HCT116 (cell line): ENCODE measurements at regions of chr15 and their contacts with region 1.

Region 1: GRCh38 chr15:71780115-71780976 is 30.0 kb upstream of the NR2E3 start:
- DNase-seq: no peak
- ATAC-seq: peak; percentile 84
- H3K4me3 ChIP-seq: no peak overlapping the region
- H3K27ac ChIP-seq: no peak overlapping the region
- H3K4me1 ChIP-seq: peaks cover 3 to 11% of the 10 kb centered on the region in 2 experiments; a peak in 2 of 4 replicates
- H3K27me3 ChIP-seq: no peaks in the 10 kb centered on the region
- CTCF ChIP-seq: peak; percentile 50 to 84 (median 71); a peak in 5 of 6 replicates
- POLR2A ChIP-seq: no peak
- RAD21 ChIP-seq: peak; percentile 60

Region 2: GRCh38 chr15:71651750-71652186 is 128.6 kb before region 1 on chr15:
- CTCF ChIA-PET with region 1: no interaction called
- POLR2A ChIA-PET with region 1: no interaction called
- RAD21 ChIA-PET with region 1: no interaction called
- intact Hi-C with region 1: no loop called
- DNase-seq: peak; percentile 39
- ATAC-seq: peak; percentile 75
- H3K4me3 ChIP-seq: no peak overlapping the region
- H3K27ac ChIP-seq: no peak overlapping the region
- H3K4me1 ChIP-seq: no peaks in the 10 kb centered on the region
- H3K27me3 ChIP-seq: no peaks in the 10 kb centered on the region
- CTCF ChIP-seq: peak; percentile 47 to 58 (median 49); a peak in 5 of 6 replicates
- POLR2A ChIP-seq: no peak
- RAD21 ChIP-seq: peak; percentile 67

Region 3: DNA sequence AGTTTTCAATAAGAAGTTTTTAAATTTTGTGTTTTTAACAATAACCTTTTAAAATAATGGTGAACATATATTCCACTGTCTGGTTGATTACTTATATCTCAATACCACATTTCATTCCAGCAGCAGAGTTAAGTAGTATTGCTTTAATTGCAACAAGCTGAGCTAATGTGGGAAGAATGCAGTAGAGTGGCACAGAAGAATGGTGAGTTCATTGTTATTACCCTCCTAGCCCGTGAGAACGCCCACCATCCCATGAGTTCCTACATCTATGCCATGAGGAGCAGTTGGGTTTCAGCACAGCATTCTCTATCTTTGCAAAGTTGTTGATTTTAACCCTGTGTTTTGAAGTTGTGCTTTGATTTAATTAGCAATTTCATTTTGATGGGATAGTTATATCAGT is 12.2 kb after region 1 on chr15:
- CTCF ChIA-PET with region 1: interaction called, 23 read pairs
- POLR2A ChIA-PET with region 1: interaction called, 4 read pairs
- RAD21 ChIA-PET with region 1: no interaction called
- intact Hi-C with region 1: no loop called
- DNase-seq: no peak
- ATAC-seq: no peak
- H3K4me3 ChIP-seq: no peak overlapping the region
- H3K27ac ChIP-seq: no peak overlapping the region
- H3K4me1 ChIP-seq: peaks cover 30 to 33% of the 10 kb centered on the region in 2 experiments
- H3K27me3 ChIP-seq: no peaks in the 10 kb centered on the region
- CTCF ChIP-seq: no peak
- POLR2A ChIP-seq: no peak
- RAD21 ChIP-seq: no peak